Transverse colon (tissue), 4 donors: ENCODE measurements at regions of chr7 and their contacts with region 1.

Region 1: GRCh38 chr7:101804967-101805366 is 12.5 kb upstream of the CUX1 start:
- DNase-seq: peak; percentile 34
- H3K4me3 ChIP-seq: no peak overlapping the region
- H3K27ac ChIP-seq: no peak overlapping the region
- H3K4me1 ChIP-seq: peaks cover 5 to 24% (median 14%) of the 10 kb centered on the region in 4 donors
- H3K27me3 ChIP-seq: peaks cover 28% of the 10 kb centered on the region
- CTCF ChIP-seq: peak; percentile 31 to 52 (median 48)
- EP300 ChIP-seq: no peak
- POLR2A ChIP-seq: no peak

Region 2: DNA sequence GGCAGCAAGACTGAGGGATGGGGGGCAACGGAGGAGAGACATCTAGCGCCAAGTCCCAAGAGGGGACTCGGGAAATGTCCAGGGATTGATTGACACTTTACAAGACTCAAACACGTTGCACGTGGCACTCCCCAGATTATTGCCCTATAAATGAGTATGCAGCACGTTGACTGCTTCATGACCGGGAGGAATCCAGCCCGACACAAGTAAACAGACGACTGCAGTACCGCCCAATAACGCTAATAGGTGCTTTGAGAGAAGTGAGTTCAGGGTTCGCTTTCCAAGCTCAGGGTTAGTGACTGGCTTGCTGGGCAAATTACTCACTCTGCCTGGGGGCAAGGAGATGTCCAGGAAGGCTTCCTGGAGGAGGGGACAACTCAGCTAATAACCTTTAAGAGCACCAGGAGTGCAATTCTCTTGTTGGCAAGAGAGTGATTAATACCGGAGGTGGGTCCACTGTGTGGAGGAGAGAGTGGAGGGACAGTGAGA is 102.6 kb before region 1 on chr7:
- in situ Hi-C with region 1: no loop called
- intact Hi-C with region 1: no loop called
- DNase-seq: peak; percentile 87
- H3K4me3 ChIP-seq: peak overlapping the region in 1 of 4 donors; percentile 3
- H3K27ac ChIP-seq: peak overlapping the region; percentile 63 to 88 (median 78)
- H3K4me1 ChIP-seq: peaks cover 6 to 40% (median 20%) of the 10 kb centered on the region in 4 donors
- H3K27me3 ChIP-seq: no peaks in the 10 kb centered on the region
- CTCF ChIP-seq: peak in 4 of 5 experiments; percentile 27 to 78 (median 56)
- EP300 ChIP-seq: peak; percentile 28
- POLR2A ChIP-seq: peak; percentile 79

Region 3: GRCh38 chr7:101733713-101734475 is 71.1 kb before region 1 on chr7:
- in situ Hi-C with region 1: no loop called
- intact Hi-C with region 1: no loop called
- DNase-seq: peak; percentile 53
- H3K4me3 ChIP-seq: peak overlapping the region in 3 of 4 donors; percentile 14 to 46 (median 18)
- H3K27ac ChIP-seq: peak overlapping the region; percentile 33 to 54 (median 52)
- H3K4me1 ChIP-seq: peaks cover 0 to 24% (median 15%) of the 10 kb centered on the region in 4 donors
- H3K27me3 ChIP-seq: no peaks in the 10 kb centered on the region
- CTCF ChIP-seq: no peak
- EP300 ChIP-seq: no peak
- POLR2A ChIP-seq: no peak

Region 4: GRCh38 chr7:101754424-101755159 is 50.4 kb before region 1 on chr7:
- in situ Hi-C with region 1: no loop called
- intact Hi-C with region 1: loop called (anchors 10 kb)
- DNase-seq: no peak
- H3K4me3 ChIP-seq: peak overlapping the region; percentile 16 to 48 (median 26)
- H3K27ac ChIP-seq: no peak overlapping the region
- H3K4me1 ChIP-seq: peaks cover 0 to 11% (median 4%) of the 10 kb centered on the region in 4 donors
- H3K27me3 ChIP-seq: peaks cover 2% of the 10 kb centered on the region
- CTCF ChIP-seq: no peak
- EP300 ChIP-seq: no peak
- POLR2A ChIP-seq: no peak

Region 5: GRCh38 chr7:101978683-101979082 is 173.7 kb after region 1 on chr7:
- in situ Hi-C with region 1: no loop called
- intact Hi-C with region 1: no loop called
- DNase-seq: no peak
- H3K4me3 ChIP-seq: no peak overlapping the region
- H3K27ac ChIP-seq: no peak overlapping the region
- H3K4me1 ChIP-seq: peaks cover 0 to 13% (median 10%) of the 10 kb centered on the region in 4 donors
- H3K27me3 ChIP-seq: no peaks in the 10 kb centered on the region
- CTCF ChIP-seq: no peak
- EP300 ChIP-seq: no peak
- POLR2A ChIP-seq: no peak